ENCODE measurements at regions of chr2 and their contacts with region 1.

Region 1: GRCh38 chr2:64488050-64488974 is 34.4 kb downstream of the LGALSL start:
- DNase-seq: peak; percentile 30
- H3K4me3 ChIP-seq: peak overlapping the region in 1 of 2 experiments; percentile 47; a peak in 1 of 4 replicates
- H3K27ac ChIP-seq: no peak overlapping the region; a peak in 1 of 4 replicates
- H3K4me1 ChIP-seq: peaks cover 0 to 16% of the 10 kb centered on the region in 2 experiments; a peak in 1 of 4 replicates
- H3K27me3 ChIP-seq: no peaks in the 10 kb centered on the region; the same call in 1 of the 2 replicates
- CTCF ChIP-seq: peak; percentile 79
- EP300 ChIP-seq: no peak
- RAD21 ChIP-seq: peak; percentile 59

Region 2: GRCh38 chr2:64192664-64193105 is 295.6 kb before region 1 on chr2:
- CTCF ChIA-PET with region 1: no interaction called
- POLR2A ChIA-PET with region 1: no interaction called
- DNase-seq: no peak
- H3K4me3 ChIP-seq: no peak overlapping the region
- H3K27ac ChIP-seq: no peak overlapping the region
- H3K4me1 ChIP-seq: peaks cover 0 to 2% of the 10 kb centered on the region in 2 experiments; a peak in 2 of 4 replicates
- H3K27me3 ChIP-seq: no peaks in the 10 kb centered on the region
- CTCF ChIP-seq: no peak
- EP300 ChIP-seq: no peak
- RAD21 ChIP-seq: no peak

Region 3: DNA sequence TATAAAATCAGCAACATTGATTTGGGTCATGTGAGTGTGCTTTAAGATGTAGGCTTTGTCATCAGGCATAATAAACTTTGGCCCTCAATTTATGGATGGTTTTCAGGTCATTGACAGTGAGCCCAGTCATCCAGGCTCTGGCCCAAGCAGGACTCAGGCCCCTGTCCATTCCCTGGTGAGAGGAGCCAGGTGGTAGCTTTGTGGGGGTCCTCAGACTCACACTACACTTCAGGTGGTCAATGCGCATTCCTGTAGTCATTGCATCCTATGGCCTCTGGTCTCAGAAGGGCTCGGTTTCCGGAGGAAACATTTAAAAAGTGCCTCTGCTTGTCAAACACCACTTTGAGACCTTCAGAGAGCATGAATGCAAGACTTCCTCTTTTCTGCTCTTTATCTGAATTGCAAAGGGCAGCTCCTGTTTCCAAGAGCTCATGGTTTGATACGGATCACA is 14.2 kb before region 1 on chr2:
- CTCF ChIA-PET with region 1: interaction called, 14 read pairs
- POLR2A ChIA-PET with region 1: no interaction called
- DNase-seq: no peak
- H3K4me3 ChIP-seq: no peak overlapping the region
- H3K27ac ChIP-seq: no peak overlapping the region
- H3K4me1 ChIP-seq: no peaks in the 10 kb centered on the region; a peak in 1 of 4 replicates
- H3K27me3 ChIP-seq: peaks cover under 1% of the 10 kb centered on the region; the same call in 1 of the 2 replicates
- CTCF ChIP-seq: no peak
- EP300 ChIP-seq: no peak
- RAD21 ChIP-seq: no peak

Region 4: DNA sequence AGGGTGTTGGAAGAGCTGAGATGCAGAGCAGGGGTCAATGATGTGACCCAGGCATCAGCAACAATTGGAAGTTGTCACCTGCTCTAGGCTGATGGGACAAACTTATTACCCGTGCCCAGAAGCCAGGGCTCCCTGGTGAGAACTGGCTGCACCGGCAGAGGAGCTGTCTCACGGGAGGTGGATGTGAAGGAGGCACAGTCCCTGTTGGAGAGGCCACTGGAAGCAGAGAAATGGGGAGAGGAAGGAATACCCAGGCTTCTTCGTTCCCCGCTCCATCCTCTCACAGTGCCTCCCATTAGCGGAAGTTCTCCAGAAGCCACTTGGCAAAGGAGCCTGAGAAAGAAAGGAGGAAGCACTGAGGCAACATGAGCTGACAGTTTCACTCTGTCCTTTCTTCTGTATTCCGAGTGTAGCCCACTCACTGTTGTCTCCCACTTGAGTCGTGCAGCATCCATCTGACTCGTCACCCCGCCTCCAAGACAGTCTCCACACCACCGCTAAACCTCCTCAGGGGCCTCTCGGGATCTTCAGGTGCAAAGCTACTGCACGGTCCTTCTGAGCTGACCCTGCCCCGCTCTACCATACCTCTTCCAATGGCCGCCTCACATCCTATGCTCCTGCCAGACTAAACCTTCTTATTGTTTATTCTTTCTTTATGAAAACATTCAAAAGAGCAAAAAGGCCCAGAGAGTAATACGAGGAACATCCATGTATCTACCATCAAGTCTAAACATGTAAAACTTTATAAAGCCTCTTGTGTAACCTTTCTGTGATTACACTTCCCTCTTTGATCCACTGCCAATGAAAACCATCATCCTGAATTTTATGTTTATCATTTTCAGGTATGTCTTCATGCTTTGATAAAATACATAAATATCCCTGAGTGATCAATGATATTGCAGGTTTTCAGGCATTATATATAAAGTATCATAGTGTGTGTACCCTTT is 16.7 kb after region 1 on chr2:
- CTCF ChIA-PET with region 1: interaction called, 30 read pairs
- POLR2A ChIA-PET with region 1: no interaction called
- DNase-seq: no peak
- H3K4me3 ChIP-seq: no peak overlapping the region
- H3K27ac ChIP-seq: no peak overlapping the region
- H3K4me1 ChIP-seq: no peaks in the 10 kb centered on the region
- H3K27me3 ChIP-seq: no peaks in the 10 kb centered on the region
- CTCF ChIP-seq: no peak
- EP300 ChIP-seq: no peak
- RAD21 ChIP-seq: no peak